ENCODE measurements at regions of chr11 and their contacts with region 1.

Region 1: DNA sequence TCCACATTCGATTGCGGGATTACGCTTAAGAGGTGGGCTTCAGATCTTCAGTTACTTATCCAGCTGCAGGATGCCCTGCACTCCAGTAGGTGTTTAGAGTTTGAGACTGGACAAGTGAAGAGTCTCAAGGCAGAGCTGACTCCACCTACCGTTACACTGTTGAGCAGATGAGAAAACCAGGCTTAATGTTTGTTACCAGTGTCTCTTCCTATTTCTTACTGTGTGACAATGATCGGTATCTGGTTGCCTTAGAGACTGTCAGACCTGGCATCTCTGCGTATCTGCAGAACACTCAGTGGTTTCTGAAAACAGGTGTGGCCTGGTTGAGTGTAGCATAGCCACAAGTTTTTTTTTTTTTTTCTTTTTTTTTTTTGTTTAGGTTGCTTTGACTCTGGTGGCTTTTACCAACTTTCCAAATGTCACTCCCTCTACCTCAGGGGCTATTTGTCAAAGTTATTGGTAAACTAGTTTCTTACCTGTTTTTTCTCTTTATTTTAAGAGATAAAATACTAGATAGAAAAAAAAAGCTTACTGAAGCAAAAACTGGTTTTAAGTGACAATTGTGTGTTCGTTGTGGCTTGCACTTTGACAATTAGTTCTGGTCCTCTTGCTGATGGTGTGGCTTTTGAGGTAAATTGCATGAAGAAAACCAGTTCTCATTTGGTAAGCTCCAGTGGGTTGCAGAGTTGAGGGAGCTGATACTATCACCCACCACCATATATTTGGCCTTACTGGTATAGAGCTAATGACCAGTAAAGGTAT is 284.8 kb downstream of the ETS1 start:
- DNase-seq: peak; percentile 76
- ATAC-seq: peak; percentile 88
- H3K4me3 Mint-ChIP-seq: peak overlapping the region; percentile 80
- H3K27ac Mint-ChIP-seq: peak overlapping the region; percentile 95
- H3K4me1 Mint-ChIP-seq: peaks cover 84% of the 10 kb centered on the region
- H3K27me3 Mint-ChIP-seq: no peaks in the 10 kb centered on the region

Region 2: GRCh38 chr11:128336203-128336602 is 33.6 kb after region 1 on chr11:
- CTCF ChIA-PET with region 1: interaction called, 5 read pairs
- POLR2A ChIA-PET with region 1: interaction called, 10 read pairs
- intact Hi-C with region 1: no loop called
- DNase-seq: no peak
- ATAC-seq: no peak
- H3K4me3 Mint-ChIP-seq: no peak overlapping the region
- H3K27ac Mint-ChIP-seq: no peak overlapping the region
- H3K4me1 Mint-ChIP-seq: peaks cover 70% of the 10 kb centered on the region
- H3K27me3 Mint-ChIP-seq: no peaks in the 10 kb centered on the region

Measured in activated CD4-positive, alpha-beta T cell treated with anti-CD3 and anti-CD28 coated beads for 36 hours (primary cell).